ENCODE measurements at regions of chrX and their contacts with region 1.

Region 1: DNA sequence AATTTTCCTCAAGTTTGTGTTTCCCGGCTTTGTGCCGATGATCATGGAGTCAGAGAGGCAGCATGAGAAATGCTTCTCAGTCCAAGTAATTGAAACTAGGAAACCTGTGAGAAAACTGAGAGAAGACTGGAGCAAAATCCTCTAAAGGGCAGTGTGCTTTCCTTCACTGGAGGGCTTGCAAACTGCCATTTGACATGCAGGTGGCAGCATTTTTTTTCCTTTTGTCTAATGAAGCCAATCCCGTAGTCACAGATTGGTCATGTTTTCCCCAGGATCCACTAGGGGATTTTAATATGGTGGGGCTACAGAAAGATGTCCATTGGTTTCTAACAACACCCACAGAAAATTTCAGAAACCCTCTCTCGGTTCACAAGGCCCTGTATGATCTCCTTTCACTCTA is 117.4 kb upstream of the NUDT10 start:
- DNase-seq: no peak
- H3K4me3 ChIP-seq: no peak overlapping the region
- H3K27ac ChIP-seq: no peak overlapping the region
- H3K4me1 ChIP-seq: no peaks in the 10 kb centered on the region
- H3K27me3 ChIP-seq: no peaks in the 10 kb centered on the region
- CTCF ChIP-seq: no peak

Region 2: GRCh38 chrX:51281758-51282318 is 66.6 kb after region 1 on chrX:
- intact Hi-C with region 1: loop called (anchors 10 kb)
- DNase-seq: no peak
- H3K4me3 ChIP-seq: no peak overlapping the region
- H3K27ac ChIP-seq: no peak overlapping the region
- H3K4me1 ChIP-seq: no peaks in the 10 kb centered on the region
- H3K27me3 ChIP-seq: peaks cover 5% of the 10 kb centered on the region
- CTCF ChIP-seq: no peak

Measured in colonic mucosa (tissue), 4 donors.